ENCODE measurements at regions of chr14 and their contacts with region 1.

Region 1: GRCh38 chr14:55102141-55102621 is 26.9 kb upstream of the LGALS3 start:
- DNase-seq: peak; percentile 75 to 77
- ATAC-seq: peak; percentile 75 to 93 (median 87)
- H3K4me3 ChIP-seq: no peak overlapping the region
- H3K27ac ChIP-seq: peak overlapping the region; percentile 76 to 96 (median 87)
- H3K4me1 ChIP-seq: peaks cover 10 to 98% (median 85%) of the 10 kb centered on the region in 9 donors
- H3K27me3 ChIP-seq: no peaks in the 10 kb centered on the region
- CTCF ChIP-seq: no peak

Region 2: GRCh38 chr14:53581504-53581903 is 1520.7 kb before region 1 on chr14:
- intact Hi-C with region 1: no loop called
- DNase-seq: no peak
- ATAC-seq: no peak
- H3K4me3 ChIP-seq: no peak overlapping the region
- H3K27ac ChIP-seq: no peak overlapping the region
- H3K4me1 ChIP-seq: no peaks in the 10 kb centered on the region
- H3K27me3 ChIP-seq: no peaks in the 10 kb centered on the region
- CTCF ChIP-seq: no peak

Region 3: DNA sequence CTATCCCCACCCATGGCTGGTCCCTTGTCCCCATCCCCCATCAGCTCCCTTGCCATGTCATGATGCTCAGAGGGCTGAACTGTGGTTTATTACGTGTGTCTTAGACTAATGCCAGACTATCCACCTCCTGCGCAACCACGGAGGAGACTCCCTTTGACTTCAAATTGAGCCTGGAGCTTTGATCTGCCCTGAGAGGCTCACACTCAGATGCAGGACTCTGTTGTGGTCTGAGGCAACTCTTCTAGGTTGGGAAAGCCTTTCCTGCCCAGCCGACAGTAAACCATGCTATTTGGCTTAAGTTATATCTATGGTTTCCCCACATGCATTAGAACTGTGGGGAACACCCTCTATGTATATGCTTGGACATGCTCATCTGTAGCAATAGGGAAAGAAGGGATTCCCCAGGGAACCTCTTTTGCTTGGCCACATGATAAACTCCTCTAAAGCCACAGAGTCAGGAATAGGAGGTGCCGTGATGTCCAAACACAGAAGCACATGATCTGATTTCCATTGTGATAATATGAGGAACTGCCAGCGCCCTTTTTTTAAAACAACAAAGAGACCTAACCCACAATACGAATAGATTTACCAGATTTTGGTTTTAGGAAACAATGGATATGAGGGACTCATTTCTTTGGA is 15.7 kb after region 1 on chr14:
- intact Hi-C with region 1: loop called in 1 of 10 experiments (anchors 2 kb)
- DNase-seq: peak in 1 of 2 donors; percentile 61
- ATAC-seq: peak in 7 of 8 donors; percentile 32 to 83 (median 60)
- H3K4me3 ChIP-seq: no peak overlapping the region
- H3K27ac ChIP-seq: peak overlapping the region; percentile 64 to 93 (median 88)
- H3K4me1 ChIP-seq: peaks cover 14 to 73% (median 68%) of the 10 kb centered on the region in 9 donors
- H3K27me3 ChIP-seq: no peaks in the 10 kb centered on the region
- CTCF ChIP-seq: no peak

Region 4: DNA sequence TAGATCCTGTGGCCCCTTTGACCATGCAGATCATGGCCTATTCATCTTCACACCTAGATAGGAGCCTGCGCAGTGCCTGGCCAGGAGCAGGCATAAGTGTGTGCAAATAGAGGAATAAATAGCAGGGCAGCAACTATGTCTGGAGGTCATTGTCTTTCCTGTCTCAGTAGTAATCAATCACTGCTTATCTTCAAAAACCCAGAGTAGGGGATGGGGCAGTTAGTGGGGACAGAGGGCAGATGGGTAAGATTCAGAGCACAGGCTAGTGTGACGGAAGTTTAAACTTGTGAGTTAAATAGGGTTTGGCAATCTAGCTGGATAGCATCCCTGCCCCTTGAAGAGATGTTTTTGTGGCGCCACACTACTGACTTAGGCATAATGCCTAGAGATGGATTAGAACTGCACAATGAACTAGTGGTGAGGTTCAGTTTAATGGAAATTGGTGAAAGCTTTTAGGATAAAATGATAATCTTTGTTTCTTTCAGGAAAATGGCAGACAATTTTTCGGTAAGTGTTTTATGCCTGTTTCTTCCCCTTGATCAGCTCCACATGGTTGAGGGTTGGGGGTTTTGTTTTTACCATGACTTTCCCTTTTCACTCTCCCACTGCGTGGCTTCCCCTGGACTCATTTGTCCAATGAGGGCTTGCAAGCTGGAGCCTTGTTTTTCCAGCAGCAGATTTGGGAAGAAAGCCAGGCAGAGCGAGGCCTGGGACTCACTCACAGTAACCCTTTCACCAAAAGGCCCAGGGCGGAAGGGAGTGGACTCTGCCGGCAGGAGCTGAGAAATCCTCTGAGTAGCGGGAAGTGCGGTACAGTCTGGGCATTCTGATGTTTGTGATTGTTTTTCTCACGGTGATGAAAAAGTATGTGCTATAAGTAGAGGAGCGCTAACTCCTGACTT is 35.0 kb after region 1 on chr14:
- intact Hi-C with region 1: loop called in 3 of 10 experiments (anchors 2 to 5 kb)
- DNase-seq: peak; percentile 77 to 95
- ATAC-seq: peak; percentile 88 to 96 (median 93)
- H3K4me3 ChIP-seq: peak overlapping the region in 7 of 10 donors; percentile 14 to 36 (median 32)
- H3K27ac ChIP-seq: peak overlapping the region; percentile 2 to 98 (median 77)
- H3K4me1 ChIP-seq: peaks cover 11 to 82% (median 64%) of the 10 kb centered on the region in 9 donors
- H3K27me3 ChIP-seq: no peaks in the 10 kb centered on the region
- CTCF ChIP-seq: peak in 3 of 9 donors; percentile 31 to 42 (median 31)

Measured in heart right ventricle (tissue), 16 donors.